Heart right ventricle (tissue), 16 donors: ENCODE measurements at regions of chr18 and their contacts with region 1.

Region 1: GRCh38 chr18:63267975-63268721 is 51.4 kb downstream of the BCL2 start:
- DNase-seq: no peak
- ATAC-seq: no peak
- H3K4me3 ChIP-seq: no peak overlapping the region
- H3K27ac ChIP-seq: no peak overlapping the region
- H3K4me1 ChIP-seq: peaks cover 0 to 34% (median 16%) of the 10 kb centered on the region in 9 donors
- H3K27me3 ChIP-seq: no peaks in the 10 kb centered on the region
- CTCF ChIP-seq: no peak

Region 2: GRCh38 chr18:63207143-63207790 is 60.9 kb before region 1 on chr18:
- intact Hi-C with region 1: loop called in 1 of 10 experiments (anchors 10 kb)
- DNase-seq: no peak
- ATAC-seq: peak in 5 of 8 donors; percentile 22 to 65 (median 41)
- H3K4me3 ChIP-seq: no peak overlapping the region
- H3K27ac ChIP-seq: no peak overlapping the region
- H3K4me1 ChIP-seq: peaks cover 0 to 30% (median 21%) of the 10 kb centered on the region in 9 donors
- H3K27me3 ChIP-seq: no peaks in the 10 kb centered on the region
- CTCF ChIP-seq: no peak